ENCODE measurements at regions of chr1 and their contacts with region 1.

Region 1: GRCh38 chr1:12619792-12620487 is 1.9 kb upstream of the DHRS3 start:
- DNase-seq: peak; percentile 79
- H3K4me3 Mint-ChIP-seq: peak overlapping the region; percentile 92
- H3K27ac Mint-ChIP-seq: peak overlapping the region; percentile 96
- H3K4me1 Mint-ChIP-seq: peaks cover 5% of the 10 kb centered on the region
- H3K27me3 Mint-ChIP-seq: no peaks in the 10 kb centered on the region
- CTCF ChIP-seq: peak; percentile 84

Region 2: DNA sequence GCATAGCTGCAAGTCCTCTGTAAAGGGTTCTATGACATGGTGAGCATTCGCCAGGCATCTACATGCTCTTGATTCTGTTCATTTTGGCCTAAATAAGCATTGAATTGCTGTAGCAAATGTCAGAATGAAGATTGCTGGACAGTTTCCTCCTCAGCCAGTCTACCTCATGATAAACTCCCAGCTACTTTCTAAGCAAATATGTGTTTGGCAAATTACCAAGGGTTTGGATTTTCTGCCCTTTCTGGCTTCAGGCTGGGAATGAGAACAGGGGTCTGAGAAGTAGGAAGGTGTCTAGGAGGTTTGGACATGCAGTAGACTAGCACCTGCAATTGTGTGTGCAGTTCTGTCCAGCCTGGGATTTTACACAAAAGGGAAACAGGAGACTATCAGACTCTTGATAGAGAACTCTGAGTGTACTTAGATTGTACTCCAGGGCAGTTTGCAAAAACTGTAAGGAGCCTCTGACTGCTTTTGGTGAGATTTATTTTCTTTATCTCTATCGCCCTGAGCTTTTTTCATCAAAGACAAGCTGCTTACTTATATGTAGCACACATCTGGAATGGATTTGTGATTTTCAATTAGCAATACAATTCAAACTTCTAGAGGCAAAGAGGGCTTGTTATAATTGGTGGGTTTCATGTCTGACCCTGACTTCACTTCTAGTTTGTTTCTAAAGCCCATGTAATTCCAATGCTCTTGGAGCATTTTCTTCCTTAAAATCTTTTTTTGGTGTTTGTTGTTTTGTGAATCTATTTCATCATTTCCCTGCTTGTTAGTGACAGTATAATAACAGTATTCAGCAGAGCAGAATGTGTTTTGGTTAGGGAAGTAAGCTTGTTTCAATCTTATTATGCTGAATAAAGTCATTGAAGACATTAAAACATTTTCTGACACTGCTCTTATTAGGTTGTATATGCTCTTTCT is 239.4 kb before region 1 on chr1:
- CTCF ChIA-PET with region 1: interaction called, 4 read pairs
- intact Hi-C with region 1: loop called (anchors 2 kb)
- DNase-seq: no peak
- H3K4me3 Mint-ChIP-seq: peak overlapping the region; percentile 21
- H3K27ac Mint-ChIP-seq: peak overlapping the region; percentile 89
- H3K4me1 Mint-ChIP-seq: peaks cover 53% of the 10 kb centered on the region
- H3K27me3 Mint-ChIP-seq: no peaks in the 10 kb centered on the region
- CTCF ChIP-seq: no peak

Region 3: GRCh38 chr1:12454406-12455391 is 165.2 kb before region 1 on chr1:
- CTCF ChIA-PET with region 1: interaction called, 3 read pairs
- intact Hi-C with region 1: loop called (anchors 2 kb)
- DNase-seq: peak; percentile 50
- H3K4me3 Mint-ChIP-seq: no peak overlapping the region
- H3K27ac Mint-ChIP-seq: peak overlapping the region; percentile 83
- H3K4me1 Mint-ChIP-seq: peaks cover 39% of the 10 kb centered on the region
- H3K27me3 Mint-ChIP-seq: no peaks in the 10 kb centered on the region
- CTCF ChIP-seq: no peak

Region 4: DNA sequence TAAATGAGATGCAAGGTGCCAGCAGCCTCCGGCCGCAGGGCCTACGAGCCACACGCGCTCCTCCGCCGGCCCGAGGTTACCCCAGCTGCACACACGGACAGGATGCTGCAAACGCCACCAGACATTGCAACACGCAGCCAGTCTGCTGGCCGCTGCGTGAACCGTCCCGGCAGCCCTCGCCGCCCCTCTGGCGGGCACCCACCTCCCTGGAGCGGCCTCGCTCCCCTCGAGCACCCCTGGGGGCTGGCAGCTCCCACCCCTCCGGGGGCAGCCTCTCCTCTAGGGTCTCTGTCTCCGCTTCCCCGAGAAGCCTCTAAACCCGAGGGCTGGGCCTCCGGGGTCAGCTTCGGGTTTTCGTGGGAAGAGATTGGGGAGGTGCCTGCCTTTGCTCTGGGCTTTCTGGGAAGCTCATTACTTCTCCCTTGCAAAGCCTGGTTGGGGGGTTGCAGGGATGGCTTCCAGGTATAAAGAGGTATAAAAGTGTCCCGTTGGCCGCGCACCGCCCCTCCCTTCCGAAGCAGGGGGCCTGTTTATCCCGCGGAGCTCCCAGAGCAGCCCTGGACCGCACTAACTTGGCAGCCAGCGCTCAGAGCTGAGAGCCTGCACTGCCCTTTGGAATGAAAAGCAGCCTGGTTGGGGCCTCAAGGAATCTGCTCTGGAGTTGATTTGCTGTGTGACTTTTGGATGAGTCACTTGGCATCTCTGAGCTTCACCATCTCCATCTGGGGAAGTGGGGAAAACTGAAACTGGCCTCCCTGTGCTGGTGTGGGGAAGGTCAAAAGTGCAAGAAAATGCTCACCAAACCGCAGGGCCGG is 23.7 kb before region 1 on chr1:
- CTCF ChIA-PET with region 1: interaction called, 21 read pairs
- intact Hi-C with region 1: no loop called
- DNase-seq: peak; percentile 64
- H3K4me3 Mint-ChIP-seq: peak overlapping the region; percentile 59
- H3K27ac Mint-ChIP-seq: peak overlapping the region; percentile 95
- H3K4me1 Mint-ChIP-seq: peaks cover 73% of the 10 kb centered on the region
- H3K27me3 Mint-ChIP-seq: no peaks in the 10 kb centered on the region
- CTCF ChIP-seq: no peak

Region 5: DNA sequence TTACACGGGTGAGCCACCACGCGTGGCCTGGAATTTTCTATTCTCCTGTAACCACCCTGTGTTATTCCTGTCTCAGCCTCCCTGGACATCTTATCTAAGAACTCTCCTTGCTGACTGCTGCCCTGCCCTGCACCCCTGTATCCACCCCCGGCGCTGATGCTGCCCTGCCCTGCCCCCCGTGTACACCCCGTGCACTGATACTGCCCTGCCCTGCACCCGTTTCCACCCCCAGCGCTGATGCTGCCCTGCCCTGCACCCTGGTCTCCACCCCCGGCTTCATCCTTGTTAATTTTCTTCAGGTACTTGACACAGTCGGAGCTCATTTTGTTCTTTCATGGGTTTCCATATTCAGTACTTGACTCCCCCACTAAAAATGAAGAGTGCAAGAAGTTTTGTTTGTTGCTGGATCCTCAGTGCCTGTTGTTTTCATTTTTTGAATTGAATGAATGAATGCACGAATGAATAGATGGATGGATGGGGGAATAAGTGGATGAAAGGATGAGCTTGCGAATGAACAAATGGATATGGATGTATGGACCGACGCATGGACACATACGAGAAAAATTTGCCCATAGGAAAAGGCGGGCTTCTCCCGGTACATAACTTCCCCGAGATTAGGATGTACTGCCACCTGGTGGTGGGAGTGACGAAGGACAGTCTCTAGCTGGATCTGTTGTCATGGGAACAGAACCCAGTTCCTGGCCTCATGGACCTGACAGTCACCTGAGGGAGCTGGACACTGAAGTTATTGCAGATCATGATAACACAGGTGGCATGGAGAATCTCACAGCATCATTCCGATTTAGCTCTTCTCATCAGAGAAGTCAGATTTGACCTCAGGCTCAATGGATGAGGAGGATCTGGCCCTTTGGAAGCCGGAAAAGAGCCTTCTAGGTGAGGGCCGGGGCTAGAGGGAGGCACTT is 38.9 kb after region 1 on chr1:
- CTCF ChIA-PET with region 1: no interaction called
- intact Hi-C with region 1: no loop called
- DNase-seq: peak; percentile 80
- H3K4me3 Mint-ChIP-seq: no peak overlapping the region
- H3K27ac Mint-ChIP-seq: no peak overlapping the region
- H3K4me1 Mint-ChIP-seq: peaks cover 7% of the 10 kb centered on the region
- H3K27me3 Mint-ChIP-seq: peaks cover 9% of the 10 kb centered on the region
- CTCF ChIP-seq: peak; percentile 84